WTC11 (cell line): ENCODE measurements at regions of chr1 and their contacts with region 1.

Region 1: GRCh38 chr1:32107742-32108661 is at the start of gene KPNA6:
- DNase-seq: peak; percentile 90
- ATAC-seq: peak; percentile 77
- H3K4me3 Mint-ChIP-seq: peak within 1 kb of the TSS; percentile 99
- H3K27ac Mint-ChIP-seq: peak within 1 kb of the TSS; percentile 99
- H3K4me1 Mint-ChIP-seq: peaks cover 17% of the 10 kb centered on the region
- H3K27me3 Mint-ChIP-seq: no peaks in the 10 kb centered on the region
- CTCF ChIP-seq: no peak
- total RNA-seq, gene KPNA6: 91.2 to 104 TPM (median 94.0 TPM) in 3 replicates

Region 2: DNA sequence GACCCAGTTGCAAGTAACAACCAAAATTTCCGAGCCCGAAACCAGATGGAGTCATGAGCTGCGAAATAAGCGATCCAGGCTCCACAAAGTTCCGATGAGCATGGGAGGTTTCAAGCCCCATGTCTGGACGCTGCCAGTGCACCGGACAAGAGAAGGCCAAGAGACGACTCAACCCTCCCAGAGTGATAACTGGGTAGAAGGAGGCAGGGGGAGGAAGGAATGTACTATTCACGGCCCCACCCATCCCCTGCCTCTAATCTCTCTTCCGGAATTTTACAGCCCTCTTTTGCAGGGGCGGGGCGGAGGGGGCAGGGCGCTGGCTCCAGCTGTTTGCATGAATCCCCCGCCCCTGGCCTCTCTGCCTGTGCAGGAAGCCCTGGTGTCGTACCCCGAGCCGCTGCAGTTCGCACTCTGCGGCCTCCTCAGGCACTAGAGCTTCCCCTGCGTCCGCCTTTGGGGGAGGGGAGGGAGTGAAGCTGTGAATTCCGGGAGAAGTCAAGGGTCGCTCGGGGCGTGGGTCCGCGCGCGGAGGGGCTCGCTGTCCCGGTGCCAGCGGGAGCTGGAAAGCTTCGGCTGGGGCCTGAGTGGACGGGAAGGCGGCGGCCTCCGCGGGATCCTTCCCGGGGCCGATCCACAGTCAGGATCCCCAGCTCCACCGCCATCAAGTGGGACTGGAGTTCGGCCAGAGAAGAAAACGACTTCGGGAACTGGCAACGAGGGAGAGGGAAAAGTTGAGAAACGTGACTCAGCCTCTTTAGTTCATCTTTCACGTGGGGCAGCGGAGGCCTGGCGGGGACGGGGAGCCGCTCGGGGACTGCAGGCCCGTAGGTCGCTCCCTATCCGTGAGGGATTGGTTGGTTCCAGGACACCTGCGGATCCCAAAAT is 163.6 kb before region 1 on chr1:
- CTCF ChIA-PET with region 1: interaction called, 3 read pairs
- POLR2A ChIA-PET with region 1: interaction called, 12 read pairs
- DNase-seq: peak; percentile 96
- ATAC-seq: peak; percentile 95
- H3K4me3 Mint-ChIP-seq: peak overlapping the region; percentile 76
- H3K27ac Mint-ChIP-seq: peak overlapping the region; percentile 97
- H3K4me1 Mint-ChIP-seq: peaks cover 27% of the 10 kb centered on the region
- H3K27me3 Mint-ChIP-seq: peaks cover 5% of the 10 kb centered on the region
- CTCF ChIP-seq: no peak

Region 3: DNA sequence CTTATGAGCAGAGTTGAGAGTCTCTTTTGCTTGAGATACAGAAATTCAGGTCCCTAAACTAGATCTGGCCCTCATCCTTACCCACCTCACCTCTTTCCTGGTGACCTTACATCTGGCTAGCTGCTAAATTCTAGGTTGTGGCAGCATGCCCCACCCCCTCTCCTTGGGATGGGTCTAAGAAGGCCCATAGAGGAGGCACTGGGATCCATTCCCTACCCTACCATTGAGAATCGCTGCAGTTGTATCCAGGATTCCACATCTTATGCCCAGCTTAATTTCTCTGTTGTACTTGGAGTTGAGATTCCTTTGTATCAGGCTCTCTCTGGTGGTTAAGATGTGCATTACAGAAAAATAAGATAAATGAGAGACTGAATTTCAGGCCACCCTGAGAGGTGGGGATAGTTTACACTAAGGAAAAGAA is 44.7 kb before region 1 on chr1:
- CTCF ChIA-PET with region 1: interaction called, 10 read pairs
- POLR2A ChIA-PET with region 1: interaction called, 4 read pairs
- DNase-seq: no peak
- ATAC-seq: peak; percentile 25
- H3K4me3 Mint-ChIP-seq: no peak overlapping the region
- H3K27ac Mint-ChIP-seq: no peak overlapping the region; the same call in none of the 2 replicates
- H3K4me1 Mint-ChIP-seq: peaks cover 49% of the 10 kb centered on the region
- H3K27me3 Mint-ChIP-seq: no peaks in the 10 kb centered on the region
- CTCF ChIP-seq: no peak

Region 4: GRCh38 chr1:32072622-32073298 is 35.2 kb before region 1 on chr1 and contains the start of gene TMEM39B:
- CTCF ChIA-PET with region 1: interaction called, 42 read pairs
- POLR2A ChIA-PET with region 1: interaction called, 34 read pairs
- DNase-seq: peak; percentile 95
- ATAC-seq: peak; percentile 72
- H3K4me3 Mint-ChIP-seq: peak within 1 kb of the TSS; percentile 77
- H3K27ac Mint-ChIP-seq: peak within 1 kb of the TSS; percentile 96
- H3K4me1 Mint-ChIP-seq: peaks cover 22% of the 10 kb centered on the region
- H3K27me3 Mint-ChIP-seq: no peaks in the 10 kb centered on the region; the same call in 1 of the 2 replicates
- CTCF ChIP-seq: no peak
- total RNA-seq, gene TMEM39B: 18.8 to 25.8 TPM (median 23.8 TPM) in 3 replicates

Region 5: DNA sequence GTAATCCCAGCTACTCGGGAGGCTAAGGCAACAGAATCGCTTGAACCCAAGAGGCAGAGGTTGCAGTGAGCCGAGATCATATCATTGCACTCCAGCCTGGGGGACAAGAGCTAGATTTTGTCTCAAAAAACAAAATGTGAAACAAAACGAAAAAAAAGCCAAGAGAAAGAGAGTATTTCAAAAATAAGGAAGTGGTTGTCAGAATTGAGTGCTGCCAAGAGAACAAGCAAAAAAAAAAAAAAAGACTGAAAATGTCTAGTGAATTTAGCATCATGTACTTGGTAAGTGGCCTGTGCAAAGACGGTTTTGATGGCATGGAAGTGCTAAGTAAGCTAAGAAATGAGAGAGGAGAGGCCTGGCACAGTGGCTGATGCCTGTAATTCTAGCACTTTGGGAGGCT is 14.1 kb after region 1 on chr1:
- CTCF ChIA-PET with region 1: interaction called, 20 read pairs
- POLR2A ChIA-PET with region 1: interaction called, 4 read pairs
- DNase-seq: no peak
- ATAC-seq: no peak
- H3K4me3 Mint-ChIP-seq: no peak overlapping the region
- H3K27ac Mint-ChIP-seq: peak overlapping the region; percentile 2; the same call in 1 of the 2 replicates
- H3K4me1 Mint-ChIP-seq: peaks cover 6% of the 10 kb centered on the region
- H3K27me3 Mint-ChIP-seq: no peaks in the 10 kb centered on the region
- CTCF ChIP-seq: no peak

Region 6: DNA sequence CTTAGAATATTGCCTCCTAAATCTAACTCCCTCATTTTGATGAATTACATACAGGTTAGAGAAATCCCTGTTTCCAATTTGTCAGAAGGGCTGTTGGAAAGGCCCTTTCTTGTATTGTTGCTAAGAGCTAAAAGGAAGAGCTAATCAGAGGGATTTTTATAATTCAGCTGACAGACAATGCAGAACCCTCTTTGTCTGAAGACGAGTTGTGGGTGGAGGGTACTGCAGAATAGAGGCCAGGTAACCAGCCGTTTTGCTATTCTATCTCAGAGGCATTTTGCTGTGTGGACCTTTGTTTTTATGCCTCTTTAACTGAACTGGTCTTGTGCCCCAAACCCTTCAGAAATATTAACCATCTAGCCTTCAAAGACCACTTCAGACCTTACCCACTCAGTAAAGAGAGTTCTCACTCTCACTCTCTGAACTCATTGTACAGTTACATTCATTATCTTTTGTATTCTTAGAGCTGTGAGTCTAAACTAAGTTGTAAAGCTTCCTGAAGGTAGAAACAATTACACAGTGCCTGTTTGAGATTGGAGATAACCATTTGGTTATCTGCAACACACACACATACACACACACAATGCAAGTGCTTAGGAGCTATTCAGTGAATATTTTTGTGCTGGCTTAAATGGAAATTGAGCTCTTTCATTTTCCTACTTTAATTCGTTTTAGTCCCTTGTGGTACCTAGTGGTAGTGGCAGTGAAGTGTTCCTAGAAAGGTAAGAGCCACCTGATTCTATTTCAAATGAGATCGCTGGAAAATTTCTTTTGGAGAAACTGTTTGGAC is 19.6 kb after region 1 on chr1:
- CTCF ChIA-PET with region 1: interaction called, 20 read pairs
- POLR2A ChIA-PET with region 1: no interaction called
- DNase-seq: no peak
- ATAC-seq: no peak; the same call in 1 of the 2 replicates
- H3K4me3 Mint-ChIP-seq: no peak overlapping the region
- H3K27ac Mint-ChIP-seq: peak overlapping the region; percentile 31
- H3K4me1 Mint-ChIP-seq: peaks cover 25% of the 10 kb centered on the region
- H3K27me3 Mint-ChIP-seq: no peaks in the 10 kb centered on the region
- CTCF ChIP-seq: no peak

Region 7: DNA sequence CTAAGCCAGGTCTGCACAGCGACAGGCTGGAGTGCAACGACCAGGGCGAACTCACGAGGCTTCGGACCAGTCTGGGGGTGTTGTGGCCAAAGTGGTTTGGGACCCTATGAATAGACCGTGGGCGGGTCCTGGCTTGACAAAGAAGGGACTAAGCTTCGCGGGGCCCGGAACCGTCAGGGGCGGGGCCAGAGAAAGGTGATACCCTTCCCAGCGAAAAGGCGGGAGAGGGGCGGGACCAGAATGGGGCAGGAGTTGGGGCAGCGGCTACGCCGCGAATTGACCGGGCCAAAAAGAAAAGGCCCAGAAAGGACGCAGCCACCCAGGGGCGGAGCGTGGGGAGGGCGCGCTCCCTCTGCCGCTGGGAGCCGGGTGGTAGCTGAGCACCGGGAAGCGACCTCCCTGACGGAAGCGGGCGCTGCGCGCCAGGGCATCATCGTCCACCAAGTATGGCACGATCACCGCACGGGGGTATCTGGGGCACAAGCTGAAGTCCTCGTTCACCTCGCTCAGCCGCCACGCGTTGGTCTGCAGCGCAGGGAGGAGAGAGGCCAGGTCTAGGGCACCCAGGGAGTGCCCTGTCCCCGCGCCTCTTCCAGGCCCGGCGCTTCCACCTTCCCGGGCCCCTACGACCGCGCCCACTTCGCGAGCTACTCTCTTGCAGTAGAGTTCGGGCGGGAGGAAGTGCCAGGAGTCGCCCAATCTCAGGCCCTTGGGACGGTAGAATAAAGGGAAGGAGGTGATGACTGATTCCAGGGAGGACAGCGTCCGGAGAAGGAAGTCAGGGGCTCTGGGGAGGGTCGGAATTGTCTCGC is 132.3 kb after region 1 on chr1:
- CTCF ChIA-PET with region 1: no interaction called
- POLR2A ChIA-PET with region 1: interaction called, 11 read pairs
- DNase-seq: peak; percentile 98
- ATAC-seq: peak; percentile 84
- H3K4me3 Mint-ChIP-seq: peak overlapping the region; percentile 84
- H3K27ac Mint-ChIP-seq: peak overlapping the region; percentile 78
- H3K4me1 Mint-ChIP-seq: peaks cover 21% of the 10 kb centered on the region
- H3K27me3 Mint-ChIP-seq: peaks cover 3% of the 10 kb centered on the region; the same call in 1 of the 2 replicates
- CTCF ChIP-seq: no peak